Natural killer cell (primary cell): ENCODE measurements at regions of chr7 and their contacts with region 1.

Region 1: DNA sequence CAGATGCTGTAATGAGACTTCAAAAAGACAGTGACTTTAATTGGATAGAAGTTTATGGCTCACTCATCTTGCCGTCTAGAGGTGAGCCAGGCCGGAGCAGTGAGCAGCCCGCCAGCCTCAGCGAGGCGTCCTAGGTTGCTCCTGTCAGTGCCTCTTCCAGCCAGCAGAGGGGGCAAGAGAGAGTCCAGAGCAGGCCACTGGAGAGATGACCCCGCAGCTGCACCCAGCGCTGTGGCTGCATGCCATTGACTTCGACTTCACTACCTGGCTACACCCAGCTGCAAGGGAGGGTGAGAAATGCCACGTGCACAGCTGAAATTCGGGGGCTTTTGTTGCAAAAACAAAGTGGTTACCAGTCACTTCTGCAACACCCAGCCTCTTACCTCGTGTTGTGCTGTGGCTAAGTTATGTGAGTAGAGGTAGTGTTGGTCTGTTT is 26.5 kb downstream of the NUB1 start:
- DNase-seq: peak; percentile 66 to 90
- ATAC-seq: peak; percentile 95 to 100 (median 98)
- H3K4me3 ChIP-seq: no peak overlapping the region
- H3K4me3 Mint-ChIP-seq: no peak overlapping the region
- H3K27ac ChIP-seq: no peak overlapping the region
- H3K27ac Mint-ChIP-seq: no peak overlapping the region
- H3K4me1 ChIP-seq: peaks cover 5% of the 10 kb centered on the region
- H3K4me1 Mint-ChIP-seq: peaks cover 8 to 17% of the 10 kb centered on the region in 2 donors
- H3K27me3 ChIP-seq: no peaks in the 10 kb centered on the region
- H3K27me3 Mint-ChIP-seq: no peaks in the 10 kb centered on the region
- CTCF ChIP-seq: peak; percentile 93

Region 2: GRCh38 chr7:151410405-151411390 is 42.5 kb after region 1 on chr7:
- intact Hi-C with region 1: loop called (anchors 2 kb)
- DNase-seq: peak; percentile 29 to 65
- ATAC-seq: peak in 1 of 3 donors; percentile 17
- H3K4me3 ChIP-seq: peak overlapping the region; percentile 55
- H3K4me3 Mint-ChIP-seq: peak overlapping the region; percentile 58
- H3K27ac ChIP-seq: peak overlapping the region; percentile 94
- H3K27ac Mint-ChIP-seq: peak overlapping the region in 1 of 2 donors; percentile 87
- H3K4me1 ChIP-seq: peaks cover 31% of the 10 kb centered on the region
- H3K4me1 Mint-ChIP-seq: peaks cover 7 to 21% of the 10 kb centered on the region in 2 donors
- H3K27me3 ChIP-seq: peaks cover 16% of the 10 kb centered on the region
- H3K27me3 Mint-ChIP-seq: peaks cover 38 to 51% of the 10 kb centered on the region in 2 donors
- CTCF ChIP-seq: no peak

Region 3: DNA sequence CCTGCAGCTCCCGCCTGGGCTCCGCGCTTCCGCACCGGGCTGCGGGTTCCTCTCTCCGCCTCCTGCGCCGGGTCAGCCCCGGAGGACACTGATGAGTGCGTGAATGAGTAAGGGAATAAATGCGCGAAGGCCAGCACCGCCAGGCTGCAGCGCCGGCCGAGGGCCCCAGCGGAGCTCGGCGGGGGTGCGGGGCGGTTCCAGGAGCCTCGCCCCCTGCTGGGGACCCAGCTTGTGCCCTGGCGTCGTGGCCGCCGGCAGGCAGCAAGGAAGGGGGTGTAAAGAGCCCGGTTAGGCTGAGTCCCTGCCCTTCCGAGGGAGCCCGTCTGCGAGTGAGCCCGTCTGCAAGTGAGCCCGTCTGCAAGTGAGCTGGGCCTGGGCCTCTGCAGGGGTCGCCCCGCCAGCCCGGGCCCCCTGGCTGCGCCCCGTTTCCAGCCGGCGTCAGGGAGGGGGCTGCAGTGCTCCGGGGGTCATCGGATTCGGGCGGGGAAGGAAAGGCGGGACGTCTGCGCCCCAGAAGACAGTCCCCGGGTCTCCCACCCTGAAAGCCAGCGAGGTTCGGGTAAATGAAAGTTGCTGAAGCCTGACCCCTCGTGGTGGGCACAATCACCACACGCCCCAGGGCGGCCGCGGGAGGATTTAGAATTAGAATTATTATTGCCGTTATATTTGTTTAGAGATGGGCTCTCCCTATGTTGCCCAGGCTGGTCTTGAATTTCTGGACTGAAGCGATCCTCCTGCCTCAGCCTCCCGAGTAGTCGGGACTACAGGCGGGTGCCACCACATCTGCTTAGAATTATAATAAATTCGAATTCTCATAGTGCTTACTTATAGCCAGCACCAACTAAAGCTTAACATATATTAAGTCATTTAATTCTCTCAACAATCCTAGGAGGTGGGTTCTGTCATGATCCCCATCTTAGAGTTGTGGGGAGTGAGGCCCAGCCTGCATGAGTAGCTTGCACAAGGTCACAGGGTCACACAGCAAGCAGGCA is 80.4 kb after region 1 on chr7:
- intact Hi-C with region 1: loop called (anchors 1 kb)
- DNase-seq: peak; percentile 73 to 88
- ATAC-seq: peak; percentile 88 to 90 (median 89)
- H3K4me3 ChIP-seq: peak overlapping the region; percentile 47
- H3K4me3 Mint-ChIP-seq: peak overlapping the region; percentile 79
- H3K27ac ChIP-seq: peak overlapping the region; percentile 17
- H3K27ac Mint-ChIP-seq: peak overlapping the region in 1 of 2 donors; percentile 71
- H3K4me1 ChIP-seq: peaks cover 5% of the 10 kb centered on the region
- H3K4me1 Mint-ChIP-seq: no peaks in the 10 kb centered on the region
- H3K27me3 ChIP-seq: no peaks in the 10 kb centered on the region
- H3K27me3 Mint-ChIP-seq: peaks cover 12% of the 10 kb centered on the region in 2 donors
- CTCF ChIP-seq: peak; percentile 83

Region 4: DNA sequence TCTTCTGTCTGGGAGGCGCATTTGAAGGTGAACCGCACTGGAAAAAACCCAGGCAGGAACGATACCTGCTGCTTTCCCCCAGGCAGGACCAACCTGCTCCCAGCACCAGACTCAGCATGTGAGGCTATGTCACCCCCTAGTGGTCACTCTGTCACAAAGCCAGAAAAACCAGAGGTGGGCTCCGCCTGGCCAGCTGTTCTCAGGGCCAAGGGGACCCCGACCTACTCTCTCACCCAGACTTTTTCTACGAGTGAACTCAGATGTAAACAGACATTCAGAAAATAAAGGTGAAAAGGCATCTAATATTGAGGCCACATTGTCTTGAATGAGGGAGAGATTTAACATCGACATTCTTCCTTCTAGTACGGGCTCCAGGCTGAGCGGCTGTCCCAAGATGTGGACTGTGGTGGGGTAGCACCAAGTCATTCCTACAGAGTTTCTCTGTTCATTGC is 391.5 kb after region 1 on chr7:
- intact Hi-C with region 1: loop called (anchors 2 kb)
- DNase-seq: peak; percentile 31 to 83
- ATAC-seq: peak; percentile 61 to 80 (median 76)
- H3K4me3 ChIP-seq: no peak overlapping the region
- H3K4me3 Mint-ChIP-seq: no peak overlapping the region
- H3K27ac ChIP-seq: no peak overlapping the region
- H3K27ac Mint-ChIP-seq: peak overlapping the region in 1 of 2 donors; percentile 16
- H3K4me1 ChIP-seq: peaks cover 11% of the 10 kb centered on the region
- H3K4me1 Mint-ChIP-seq: peaks cover 19 to 26% of the 10 kb centered on the region in 2 donors
- H3K27me3 ChIP-seq: no peaks in the 10 kb centered on the region
- H3K27me3 Mint-ChIP-seq: no peaks in the 10 kb centered on the region
- CTCF ChIP-seq: peak; percentile 77